Left ventricle myocardium inferior (tissue), 1 donor: ENCODE measurements at regions of chr9 and their contacts with region 1.

Region 1: GRCh38 chr9:33972698-33973097 is 76.0 kb downstream of the UBAP2 start:
- DNase-seq: no peak
- H3K4me3 ChIP-seq: no peak overlapping the region
- H3K27ac ChIP-seq: no peak overlapping the region
- H3K4me1 ChIP-seq: peaks cover 6% of the 10 kb centered on the region
- H3K27me3 ChIP-seq: no peaks in the 10 kb centered on the region
- CTCF ChIP-seq: no peak

Region 2: GRCh38 chr9:33649463-33649862 is 323.2 kb before region 1 on chr9:
- intact Hi-C with region 1: no loop called
- DNase-seq: no peak
- H3K4me3 ChIP-seq: no peak overlapping the region
- H3K27ac ChIP-seq: no peak overlapping the region
- H3K4me1 ChIP-seq: no peaks in the 10 kb centered on the region
- H3K27me3 ChIP-seq: peaks cover 71% of the 10 kb centered on the region
- CTCF ChIP-seq: no peak

Region 3: GRCh38 chr9:34069831-34070230 is 97.1 kb after region 1 on chr9:
- intact Hi-C with region 1: loop called (anchors 10 kb)
- DNase-seq: no peak
- H3K4me3 ChIP-seq: no peak overlapping the region
- H3K27ac ChIP-seq: no peak overlapping the region
- H3K4me1 ChIP-seq: no peaks in the 10 kb centered on the region
- H3K27me3 ChIP-seq: no peaks in the 10 kb centered on the region
- CTCF ChIP-seq: no peak